B cell (primary cell): ENCODE measurements at regions of chr21 and their contacts with region 1.

Region 1: DNA sequence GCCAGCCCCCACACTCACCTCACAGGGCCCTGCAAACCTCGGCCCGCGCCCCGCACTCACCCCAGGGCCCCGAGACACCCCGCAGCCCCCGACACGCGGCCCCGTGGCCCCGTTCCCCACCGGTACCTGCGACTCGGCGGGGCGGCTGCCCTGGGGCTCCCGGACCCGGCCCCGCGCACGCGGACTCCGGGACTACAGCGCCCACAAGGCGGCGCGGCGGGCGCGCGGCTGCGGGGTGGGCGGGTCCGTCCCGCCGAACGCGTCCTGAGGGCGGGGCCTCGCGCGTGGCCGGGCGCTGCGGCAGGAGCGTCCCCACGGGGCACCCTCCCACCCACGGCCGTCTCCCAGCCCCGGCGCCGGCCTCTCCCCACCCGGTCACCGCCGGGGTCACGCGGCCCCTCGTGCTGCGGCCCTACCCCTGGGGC is at the start of gene SLC19A1:
- DNase-seq: peak; percentile 81
- ATAC-seq: peak; percentile 92
- H3K4me3 ChIP-seq: peak within 1 kb of the TSS; percentile 12 to 68 (median 50)
- H3K4me3 Mint-ChIP-seq: peak within 1 kb of the TSS; percentile 78
- H3K27ac ChIP-seq: no peak within 1 kb of the TSS
- H3K27ac Mint-ChIP-seq: no peak within 1 kb of the TSS
- H3K4me1 ChIP-seq: peaks cover 16 to 22% of the 10 kb centered on the region in 2 donors
- H3K4me1 Mint-ChIP-seq: peaks cover 12% of the 10 kb centered on the region
- H3K27me3 ChIP-seq: no peaks in the 10 kb centered on the region
- H3K27me3 Mint-ChIP-seq: no peaks in the 10 kb centered on the region
- CTCF ChIP-seq: peak; percentile 48
- total RNA-seq, gene SLC19A1: 10.1 and 15.3 TPM in 2 replicates

Region 2: GRCh38 chr21:45074048-45074817 is 468.0 kb before region 1 on chr21 and contains the start of gene ADARB1:
- CTCF ChIA-PET with region 1: no interaction called
- POLR2A ChIA-PET with region 1: no interaction called
- intact Hi-C with region 1: loop called (anchors 5 kb)
- DNase-seq: peak; percentile 84
- ATAC-seq: peak; percentile 87
- H3K4me3 ChIP-seq: peak within 1 kb of the TSS; percentile 69 to 86 (median 75)
- H3K4me3 Mint-ChIP-seq: peak within 1 kb of the TSS; percentile 90
- H3K27ac ChIP-seq: peak within 1 kb of the TSS in 1 of 2 donors; percentile 51
- H3K27ac Mint-ChIP-seq: peak within 1 kb of the TSS; percentile 84
- H3K4me1 ChIP-seq: peaks cover 37 to 44% of the 10 kb centered on the region in 2 donors
- H3K4me1 Mint-ChIP-seq: peaks cover 38% of the 10 kb centered on the region
- H3K27me3 ChIP-seq: no peaks in the 10 kb centered on the region
- H3K27me3 Mint-ChIP-seq: no peaks in the 10 kb centered on the region
- CTCF ChIP-seq: no peak
- total RNA-seq, gene ADARB1: 17.1 and 23.2 TPM in 2 replicates

Region 3: DNA sequence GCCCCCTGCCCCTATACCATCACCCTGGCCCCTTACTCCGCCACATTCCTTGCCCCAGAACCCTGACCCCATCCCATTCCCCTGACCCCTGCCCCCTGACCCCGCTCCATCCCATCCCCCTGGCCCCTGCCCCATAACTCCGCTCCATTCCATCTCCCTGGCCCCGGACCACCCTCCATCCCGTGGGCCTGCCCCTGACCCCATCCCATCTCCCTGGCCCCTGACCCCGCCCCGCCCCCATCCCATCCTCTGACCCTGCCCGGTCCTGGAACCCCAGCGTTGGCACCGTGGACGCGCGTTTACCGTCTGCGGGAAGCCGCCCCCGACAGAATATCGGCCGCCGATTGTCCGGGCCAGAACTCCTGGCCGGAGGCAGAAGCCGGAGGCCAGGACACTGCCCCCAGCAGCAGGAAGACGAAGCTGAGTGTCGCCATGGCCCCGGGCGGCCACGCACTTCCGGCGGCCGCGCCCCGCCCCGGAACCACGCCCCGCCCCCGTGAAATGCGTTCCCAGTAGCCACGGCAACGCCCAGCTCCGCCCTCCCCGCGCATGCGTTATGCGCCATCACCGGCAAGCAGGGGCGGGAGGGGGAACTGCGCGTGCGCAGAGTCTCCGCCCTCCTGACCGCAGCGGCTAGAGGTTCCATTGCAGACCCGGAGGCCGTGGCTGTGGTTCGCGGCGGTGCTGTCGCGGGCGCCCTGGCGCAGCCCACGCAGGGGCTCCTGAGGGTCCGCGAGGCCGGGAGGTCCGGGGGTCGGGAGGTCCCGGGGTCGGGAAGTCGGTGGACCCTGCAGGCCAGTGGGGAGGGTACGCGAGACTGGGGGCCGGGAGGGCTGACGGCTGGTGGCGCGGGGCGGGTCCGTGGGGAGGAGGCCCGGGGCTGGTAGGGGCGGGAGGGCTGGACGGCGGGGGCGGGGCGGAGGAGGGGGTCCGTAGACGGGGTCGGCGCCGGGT is 254.5 kb before region 1 on chr21 and contains the start of gene POFUT2:
- CTCF ChIA-PET with region 1: no interaction called
- POLR2A ChIA-PET with region 1: no interaction called
- intact Hi-C with region 1: loop called (anchors 5 kb)
- DNase-seq: peak; percentile 98
- ATAC-seq: peak; percentile 88
- H3K4me3 ChIP-seq: peak within 1 kb of the TSS in 4 of 5 experiments; percentile 62 to 83 (median 74)
- H3K4me3 Mint-ChIP-seq: peak within 1 kb of the TSS; percentile 90
- H3K27ac ChIP-seq: peak within 1 kb of the TSS; percentile 47 to 82
- H3K27ac Mint-ChIP-seq: peak within 1 kb of the TSS; percentile 96
- H3K4me1 ChIP-seq: peaks cover 10 to 19% of the 10 kb centered on the region in 2 donors
- H3K4me1 Mint-ChIP-seq: peaks cover 15% of the 10 kb centered on the region
- H3K27me3 ChIP-seq: no peaks in the 10 kb centered on the region
- H3K27me3 Mint-ChIP-seq: no peaks in the 10 kb centered on the region
- CTCF ChIP-seq: no peak
- total RNA-seq, gene POFUT2: 38.3 and 44.5 TPM in 2 replicates

Region 4: DNA sequence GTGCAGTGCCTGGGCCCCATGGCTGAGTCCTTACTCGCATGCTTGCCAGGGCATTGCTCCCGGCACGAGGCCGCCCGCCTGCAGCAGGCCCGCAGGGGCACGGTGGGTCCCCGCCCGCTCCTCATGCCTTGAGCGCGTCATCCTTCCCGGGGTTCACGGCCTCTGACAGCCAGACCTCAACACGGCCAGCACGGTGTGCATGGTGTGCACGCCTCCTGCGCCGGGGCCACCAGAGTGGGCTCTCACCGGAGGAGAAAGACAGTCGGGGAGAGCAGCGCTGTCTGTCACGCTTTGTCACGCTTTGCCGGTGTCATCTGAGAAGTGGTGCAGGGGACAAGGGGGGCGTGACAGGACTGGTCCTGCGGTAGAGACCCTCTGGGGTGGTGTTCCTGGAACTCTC is 149.2 kb before region 1 on chr21:
- CTCF ChIA-PET with region 1: no interaction called
- POLR2A ChIA-PET with region 1: no interaction called
- intact Hi-C with region 1: no loop called
- DNase-seq: no peak
- ATAC-seq: no peak
- H3K4me3 ChIP-seq: no peak overlapping the region
- H3K4me3 Mint-ChIP-seq: no peak overlapping the region
- H3K27ac ChIP-seq: no peak overlapping the region
- H3K27ac Mint-ChIP-seq: no peak overlapping the region
- H3K4me1 ChIP-seq: no peaks in the 10 kb centered on the region
- H3K4me1 Mint-ChIP-seq: no peaks in the 10 kb centered on the region
- H3K27me3 ChIP-seq: peaks cover 0 to 7% (median 0%) of the 10 kb centered on the region in 4 experiments
- H3K27me3 Mint-ChIP-seq: peaks cover 8% of the 10 kb centered on the region
- CTCF ChIP-seq: no peak

Region 5: GRCh38 chr21:45478115-45478801 is 64.0 kb before region 1 on chr21:
- CTCF ChIA-PET with region 1: no interaction called
- POLR2A ChIA-PET with region 1: no interaction called
- intact Hi-C with region 1: loop called (anchors 2 kb)
- DNase-seq: peak; percentile 85
- ATAC-seq: peak; percentile 83
- H3K4me3 ChIP-seq: peak overlapping the region; percentile 11 to 53 (median 45)
- H3K4me3 Mint-ChIP-seq: peak overlapping the region; percentile 78
- H3K27ac ChIP-seq: peak overlapping the region; percentile 54 to 76
- H3K27ac Mint-ChIP-seq: peak overlapping the region; percentile 78
- H3K4me1 ChIP-seq: peaks cover 28 to 43% of the 10 kb centered on the region in 2 donors
- H3K4me1 Mint-ChIP-seq: peaks cover 29% of the 10 kb centered on the region
- H3K27me3 ChIP-seq: no peaks in the 10 kb centered on the region
- H3K27me3 Mint-ChIP-seq: no peaks in the 10 kb centered on the region
- CTCF ChIP-seq: peak; percentile 91

Region 6: DNA sequence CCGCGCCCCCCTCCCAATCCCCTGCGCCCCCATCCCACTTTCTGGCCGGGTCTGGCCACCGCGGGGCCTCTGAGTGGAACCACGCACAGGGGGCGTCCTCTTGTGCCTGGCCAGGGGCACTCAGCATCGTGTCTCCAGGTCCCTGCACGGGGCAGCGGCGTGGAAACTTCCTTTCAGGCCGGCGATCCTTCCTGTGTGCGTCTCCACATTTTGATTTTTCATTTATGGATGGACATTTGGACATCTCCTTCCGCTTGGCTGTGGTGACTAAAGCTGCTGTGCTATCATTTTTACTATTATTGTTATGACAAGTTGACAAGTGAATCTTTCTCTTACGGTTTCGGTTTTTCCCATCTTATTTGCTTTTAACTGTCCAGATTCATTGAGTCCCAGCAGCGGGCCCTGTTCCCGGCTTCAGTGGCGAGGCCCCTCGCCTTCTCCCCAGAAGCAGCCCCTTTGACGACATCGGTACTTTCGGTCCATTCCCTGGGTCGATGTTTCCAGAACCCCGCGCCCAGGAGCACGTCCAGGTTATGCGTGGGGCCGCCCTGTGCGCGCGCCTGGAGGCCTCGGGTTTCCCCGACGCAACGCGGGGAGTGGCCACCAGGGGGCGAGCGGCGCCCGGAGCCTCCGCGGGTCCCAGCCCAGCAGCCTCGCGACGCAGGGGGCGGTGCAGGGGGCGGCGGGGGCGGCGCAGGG is 12.4 kb after region 1 on chr21:
- CTCF ChIA-PET with region 1: interaction called, 4 read pairs
- POLR2A ChIA-PET with region 1: interaction called, 5 read pairs
- intact Hi-C with region 1: loop called (anchors 1 kb)
- DNase-seq: peak; percentile 89
- ATAC-seq: peak; percentile 83
- H3K4me3 ChIP-seq: peak overlapping the region; percentile 75 to 93 (median 85)
- H3K4me3 Mint-ChIP-seq: peak overlapping the region; percentile 95
- H3K27ac ChIP-seq: peak overlapping the region; percentile 34 to 63
- H3K27ac Mint-ChIP-seq: peak overlapping the region; percentile 87
- H3K4me1 ChIP-seq: peaks cover 34 to 52% of the 10 kb centered on the region in 2 donors
- H3K4me1 Mint-ChIP-seq: peaks cover 38% of the 10 kb centered on the region
- H3K27me3 ChIP-seq: no peaks in the 10 kb centered on the region
- H3K27me3 Mint-ChIP-seq: no peaks in the 10 kb centered on the region
- CTCF ChIP-seq: peak; percentile 76

Region 7: DNA sequence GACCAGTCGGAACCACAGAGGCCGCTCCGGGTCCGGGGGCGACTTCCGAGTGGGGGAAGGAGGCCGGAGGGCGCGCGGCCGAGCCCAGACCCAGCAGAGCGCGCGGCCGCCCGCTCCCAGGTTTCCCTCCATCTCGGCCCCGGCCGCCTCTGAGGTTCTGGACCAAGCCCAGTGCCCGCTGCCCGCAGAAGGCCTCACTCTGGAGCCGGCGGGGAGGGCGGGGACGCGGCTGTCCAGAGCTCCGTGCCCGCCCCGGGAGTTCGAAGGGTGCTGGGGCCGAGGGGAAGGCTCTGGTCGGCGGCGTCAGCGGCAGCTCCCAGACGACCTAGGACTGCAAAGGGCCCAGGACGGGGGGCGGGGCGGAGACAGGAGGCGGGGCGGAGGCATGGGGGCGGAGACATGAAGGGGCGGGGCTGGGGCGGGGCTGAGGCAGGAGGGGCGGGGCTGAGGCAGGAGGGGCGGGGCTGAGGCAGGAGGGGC is 48.0 kb after region 1 on chr21:
- CTCF ChIA-PET with region 1: no interaction called
- POLR2A ChIA-PET with region 1: no interaction called
- intact Hi-C with region 1: loop called (anchors 1 kb)
- DNase-seq: peak; percentile 71
- ATAC-seq: peak; percentile 67
- H3K4me3 ChIP-seq: peak overlapping the region in 4 of 5 experiments; percentile 36 to 58 (median 51)
- H3K4me3 Mint-ChIP-seq: peak overlapping the region; percentile 27
- H3K27ac ChIP-seq: no peak overlapping the region
- H3K27ac Mint-ChIP-seq: no peak overlapping the region
- H3K4me1 ChIP-seq: peaks cover 25 to 30% of the 10 kb centered on the region in 2 donors
- H3K4me1 Mint-ChIP-seq: peaks cover 11% of the 10 kb centered on the region
- H3K27me3 ChIP-seq: peaks cover 0 to 32% (median 8%) of the 10 kb centered on the region in 4 experiments
- H3K27me3 Mint-ChIP-seq: peaks cover 44% of the 10 kb centered on the region
- CTCF ChIP-seq: no peak

Region 8: GRCh38 chr21:45643021-45643980 is 101.0 kb after region 1 on chr21 and contains the start of gene PCBP3:
- CTCF ChIA-PET with region 1: no interaction called
- POLR2A ChIA-PET with region 1: no interaction called
- intact Hi-C with region 1: loop called (anchors 1 kb)
- DNase-seq: peak; percentile 90
- ATAC-seq: peak; percentile 77
- H3K4me3 ChIP-seq: peak within 1 kb of the TSS in 4 of 5 experiments; percentile 13 to 61 (median 42)
- H3K4me3 Mint-ChIP-seq: peak within 1 kb of the TSS; percentile 81
- H3K27ac ChIP-seq: no peak within 1 kb of the TSS
- H3K27ac Mint-ChIP-seq: no peak within 1 kb of the TSS
- H3K4me1 ChIP-seq: peaks cover 35% of the 10 kb centered on the region in 2 donors
- H3K4me1 Mint-ChIP-seq: peaks cover 39% of the 10 kb centered on the region
- H3K27me3 ChIP-seq: peaks cover 2 to 36% (median 31%) of the 10 kb centered on the region in 4 experiments
- H3K27me3 Mint-ChIP-seq: peaks cover 31% of the 10 kb centered on the region
- CTCF ChIP-seq: no peak
- total RNA-seq, gene PCBP3: 2.3 and 2.7 TPM in 2 replicates